ENCODE measurements at regions of chr2 and their contacts with region 1.

Region 1: GRCh38 chr2:207487650-207488311 is 42.0 kb upstream of the CREB1 start:
- DNase-seq: no peak
- H3K4me3 ChIP-seq: no peak overlapping the region
- H3K27ac ChIP-seq: no peak overlapping the region
- H3K4me1 ChIP-seq: no peaks in the 10 kb centered on the region
- H3K27me3 ChIP-seq: no peaks in the 10 kb centered on the region
- CTCF ChIP-seq: no peak

Region 2: GRCh38 chr2:207571370-207571769 is 83.6 kb after region 1 on chr2:
- CTCF ChIA-PET with region 1: no interaction called
- POLR2A ChIA-PET with region 1: no interaction called
- intact Hi-C with region 1: loop called (anchors 10 kb)
- DNase-seq: no peak
- H3K4me3 ChIP-seq: no peak overlapping the region
- H3K27ac ChIP-seq: no peak overlapping the region
- H3K4me1 ChIP-seq: no peaks in the 10 kb centered on the region
- H3K27me3 ChIP-seq: no peaks in the 10 kb centered on the region
- CTCF ChIP-seq: no peak